CD8-positive, alpha-beta T cell (primary cell): ENCODE measurements at regions of chr1 and their contacts with region 1.

Region 1: GRCh38 chr1:21255278-21255942 is 34.9 kb downstream of the ECE1 start:
- DNase-seq: peak; percentile 73 to 92 (median 83)
- ATAC-seq: peak; percentile 82
- H3K4me3 ChIP-seq: no peak overlapping the region
- H3K4me3 Mint-ChIP-seq: no peak overlapping the region
- H3K27ac ChIP-seq: no peak overlapping the region
- H3K27ac Mint-ChIP-seq: peak overlapping the region; percentile 77
- H3K4me1 ChIP-seq: peaks cover 21% of the 10 kb centered on the region
- H3K4me1 Mint-ChIP-seq: peaks cover 29% of the 10 kb centered on the region
- H3K27me3 ChIP-seq: no peaks in the 10 kb centered on the region
- H3K27me3 Mint-ChIP-seq: no peaks in the 10 kb centered on the region
- CTCF ChIP-seq: peak; percentile 63

Region 2: GRCh38 chr1:21238141-21238800 is 17.1 kb before region 1 on chr1:
- CTCF ChIA-PET with region 1: interaction called, 61 read pairs
- POLR2A ChIA-PET with region 1: interaction called, 3 read pairs
- intact Hi-C with region 1: no loop called
- DNase-seq: no peak
- ATAC-seq: no peak
- H3K4me3 ChIP-seq: no peak overlapping the region
- H3K4me3 Mint-ChIP-seq: no peak overlapping the region
- H3K27ac ChIP-seq: no peak overlapping the region
- H3K27ac Mint-ChIP-seq: no peak overlapping the region
- H3K4me1 ChIP-seq: no peaks in the 10 kb centered on the region
- H3K4me1 Mint-ChIP-seq: no peaks in the 10 kb centered on the region
- H3K27me3 ChIP-seq: no peaks in the 10 kb centered on the region
- H3K27me3 Mint-ChIP-seq: no peaks in the 10 kb centered on the region
- CTCF ChIP-seq: no peak

Region 3: GRCh38 chr1:21280011-21280471 is 24.6 kb after region 1 on chr1:
- CTCF ChIA-PET with region 1: interaction called, 14 read pairs
- POLR2A ChIA-PET with region 1: no interaction called
- intact Hi-C with region 1: no loop called
- DNase-seq: peak in 4 of 9 experiments; percentile 7 to 66 (median 38)
- ATAC-seq: peak; percentile 53
- H3K4me3 ChIP-seq: peak overlapping the region; percentile 0 to 31
- H3K4me3 Mint-ChIP-seq: peak overlapping the region; percentile 69
- H3K27ac ChIP-seq: peak overlapping the region in 1 of 2 experiments; percentile 24
- H3K27ac Mint-ChIP-seq: peak overlapping the region; percentile 86
- H3K4me1 ChIP-seq: peaks cover 42% of the 10 kb centered on the region
- H3K4me1 Mint-ChIP-seq: peaks cover 44% of the 10 kb centered on the region
- H3K27me3 ChIP-seq: no peaks in the 10 kb centered on the region
- H3K27me3 Mint-ChIP-seq: no peaks in the 10 kb centered on the region
- CTCF ChIP-seq: no peak

Region 4: DNA sequence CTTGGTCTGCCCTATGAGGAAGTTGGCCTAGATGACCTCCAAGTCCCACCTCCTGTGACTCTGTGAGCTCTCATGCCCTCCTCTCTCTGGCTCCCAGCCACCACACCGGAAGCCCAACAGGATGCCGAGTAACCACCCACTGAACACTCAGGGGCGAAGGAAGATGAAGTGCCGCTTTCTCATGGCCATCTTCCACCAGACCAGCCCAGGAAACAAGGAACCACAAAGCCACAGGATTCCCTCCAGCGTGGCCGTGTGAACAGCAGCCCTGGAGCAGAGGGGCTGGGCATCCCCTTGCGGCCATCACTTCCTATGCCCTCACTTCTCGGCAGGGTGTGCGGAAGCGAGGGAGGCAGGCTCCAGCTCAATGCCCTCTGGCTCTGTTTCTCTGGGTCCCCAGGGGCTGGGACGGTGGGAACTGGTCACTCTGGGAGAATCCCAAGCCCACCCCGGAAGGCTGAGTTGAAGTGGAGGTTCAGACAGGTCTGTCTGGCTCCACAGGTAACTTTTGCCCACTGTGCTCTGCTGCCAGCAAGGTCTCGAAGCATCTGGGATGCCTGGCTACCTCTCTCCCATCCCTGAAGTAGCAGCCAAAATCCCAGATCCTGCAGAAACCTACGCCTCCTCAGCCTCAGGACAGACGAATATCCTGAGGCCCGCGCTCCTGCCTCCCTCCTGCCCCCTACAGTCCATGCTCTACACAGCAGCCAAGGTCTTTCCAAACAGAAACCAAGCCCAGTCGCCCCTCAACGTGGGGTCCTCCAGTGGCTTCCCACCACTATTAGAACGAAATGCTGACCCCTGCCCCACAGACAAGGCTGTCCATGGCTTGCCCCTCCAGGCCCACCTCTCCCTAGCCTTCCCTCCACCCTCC is 79.0 kb after region 1 on chr1:
- CTCF ChIA-PET with region 1: interaction called, 45 read pairs
- POLR2A ChIA-PET with region 1: interaction called, 8 read pairs
- intact Hi-C with region 1: loop called in 1 of 2 experiments (anchors 1 kb)
- DNase-seq: peak; percentile 68 to 94 (median 84)
- ATAC-seq: peak; percentile 86
- H3K4me3 ChIP-seq: peak overlapping the region; percentile 29 to 47
- H3K4me3 Mint-ChIP-seq: peak overlapping the region; percentile 88
- H3K27ac ChIP-seq: peak overlapping the region; percentile 57 to 89
- H3K27ac Mint-ChIP-seq: peak overlapping the region; percentile 98
- H3K4me1 ChIP-seq: peaks cover 84% of the 10 kb centered on the region
- H3K4me1 Mint-ChIP-seq: peaks cover 85% of the 10 kb centered on the region
- H3K27me3 ChIP-seq: no peaks in the 10 kb centered on the region
- H3K27me3 Mint-ChIP-seq: no peaks in the 10 kb centered on the region
- CTCF ChIP-seq: peak; percentile 58

Region 5: DNA sequence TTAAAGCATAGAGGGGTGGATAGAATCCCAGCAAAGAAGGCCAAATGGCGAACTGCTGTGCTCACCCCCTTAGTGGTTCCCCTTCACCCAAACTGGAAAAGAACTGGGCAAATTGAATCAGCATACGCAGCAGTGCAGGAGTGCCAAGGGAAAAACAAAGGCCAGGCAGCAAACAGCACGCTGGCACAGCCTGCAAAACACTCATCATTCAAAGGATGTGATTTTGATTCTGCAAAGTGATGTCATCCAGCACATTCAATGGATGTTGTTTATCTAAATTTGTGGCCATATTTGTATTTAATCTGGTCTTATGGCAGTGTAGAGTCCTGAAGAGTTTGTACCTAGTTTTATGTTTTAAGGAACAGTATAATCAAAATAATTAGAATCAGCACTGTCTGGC is 106.7 kb after region 1 on chr1:
- CTCF ChIA-PET with region 1: interaction called, 455 read pairs
- POLR2A ChIA-PET with region 1: no interaction called
- intact Hi-C with region 1: no loop called
- DNase-seq: no peak
- ATAC-seq: no peak
- H3K4me3 ChIP-seq: no peak overlapping the region
- H3K4me3 Mint-ChIP-seq: no peak overlapping the region
- H3K27ac ChIP-seq: no peak overlapping the region
- H3K27ac Mint-ChIP-seq: no peak overlapping the region
- H3K4me1 ChIP-seq: no peaks in the 10 kb centered on the region
- H3K4me1 Mint-ChIP-seq: peaks cover 5% of the 10 kb centered on the region
- H3K27me3 ChIP-seq: no peaks in the 10 kb centered on the region
- H3K27me3 Mint-ChIP-seq: no peaks in the 10 kb centered on the region
- CTCF ChIP-seq: no peak